HepG2 (cell line): ENCODE measurements at regions of chr2 and their contacts with region 1.

Region 1: GRCh38 chr2:11344342-11344955 is at the start of gene ROCK2:
- DNase-seq: peak; percentile 88
- ATAC-seq: peak; percentile 52
- H3K4me3 ChIP-seq: peak within 1 kb of the TSS; percentile 72 to 96 (median 86)
- H3K27ac ChIP-seq: peak within 1 kb of the TSS; percentile 98
- H3K4me1 ChIP-seq: peaks cover 52% of the 10 kb centered on the region
- H3K27me3 ChIP-seq: no peaks in the 10 kb centered on the region; a peak in 1 of 5 replicates
- CTCF ChIP-seq: peak; percentile 19; the same call in 1 of the 2 replicates
- EP300 ChIP-seq: peak in 1 of 2 experiments; percentile 52; a peak in 2 of 4 replicates
- POLR2A ChIP-seq: peak; percentile 17 to 80; a peak in 3 of 4 replicates
- RAD21 ChIP-seq: no peak
- total RNA-seq, gene ROCK2: 119 and 174 TPM in 2 replicates

Region 2: GRCh38 chr2:11239666-11240462 is 104.6 kb before region 1 on chr2:
- CTCF ChIA-PET with region 1: no interaction called
- POLR2A ChIA-PET with region 1: no interaction called
- in situ Hi-C with region 1: no loop called
- intact Hi-C with region 1: loop called (anchors 2 kb)
- DNase-seq: peak; percentile 70
- ATAC-seq: peak; percentile 54
- H3K4me3 ChIP-seq: no peak overlapping the region
- H3K27ac ChIP-seq: no peak overlapping the region
- H3K4me1 ChIP-seq: peaks cover 37% of the 10 kb centered on the region
- H3K27me3 ChIP-seq: no peaks in the 10 kb centered on the region
- CTCF ChIP-seq: no peak
- EP300 ChIP-seq: no peak
- POLR2A ChIP-seq: no peak
- RAD21 ChIP-seq: no peak

Region 3: DNA sequence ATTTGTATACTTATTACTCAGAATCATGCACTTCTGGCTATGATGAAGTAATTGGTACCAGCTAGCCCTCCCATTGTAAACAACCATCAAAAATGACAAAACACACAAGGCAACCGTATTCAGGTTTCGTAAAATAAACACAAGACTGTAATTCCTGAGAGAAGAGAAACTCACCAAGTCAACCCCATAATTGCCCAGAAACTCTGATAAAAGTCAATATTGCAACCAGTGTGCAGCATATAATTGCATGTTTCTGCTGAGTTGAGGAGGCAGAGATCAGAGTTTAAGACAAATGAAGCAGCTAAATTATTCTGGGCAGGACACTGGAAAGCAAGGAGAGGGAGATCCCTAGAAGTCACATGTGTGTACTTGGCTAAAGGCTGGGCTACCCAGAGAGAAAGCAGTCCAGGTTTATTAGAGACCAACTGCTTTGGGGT is 90.3 kb before region 1 on chr2:
- CTCF ChIA-PET with region 1: no interaction called
- POLR2A ChIA-PET with region 1: no interaction called
- in situ Hi-C with region 1: no loop called
- intact Hi-C with region 1: no loop called
- DNase-seq: peak; percentile 63
- ATAC-seq: peak; percentile 38
- H3K4me3 ChIP-seq: no peak overlapping the region
- H3K27ac ChIP-seq: peak overlapping the region; percentile 30
- H3K4me1 ChIP-seq: peaks cover 14% of the 10 kb centered on the region
- H3K27me3 ChIP-seq: no peaks in the 10 kb centered on the region
- CTCF ChIP-seq: no peak
- EP300 ChIP-seq: 0 out of 4 replicates have a peak, but pooled peaks of 1 of the 2 experiments have one; percentile 10
- POLR2A ChIP-seq: no peak
- RAD21 ChIP-seq: no peak

Region 4: DNA sequence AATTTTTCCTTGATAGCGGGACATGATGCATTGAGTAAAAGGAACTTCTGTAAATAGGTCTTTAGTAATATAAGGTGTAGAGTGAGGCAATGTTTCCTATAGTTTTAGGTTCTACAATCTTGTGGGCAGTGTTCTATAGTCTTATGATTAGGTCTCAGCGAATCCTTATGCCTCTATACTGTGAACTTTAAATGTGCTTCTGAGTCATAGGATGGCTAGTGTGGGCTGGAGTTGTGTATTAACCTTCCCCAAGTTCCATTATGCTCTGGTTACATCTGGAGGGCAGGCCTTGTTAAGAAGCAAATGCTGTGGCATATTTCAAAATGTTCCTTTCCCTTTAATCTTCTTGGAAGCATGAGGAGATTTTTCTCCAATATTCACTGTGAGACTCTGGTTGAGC is 73.6 kb before region 1 on chr2:
- CTCF ChIA-PET with region 1: no interaction called
- POLR2A ChIA-PET with region 1: no interaction called
- in situ Hi-C with region 1: no loop called
- intact Hi-C with region 1: no loop called
- DNase-seq: no peak
- ATAC-seq: peak; percentile 28; the same call in 2 of the 3 replicates
- H3K4me3 ChIP-seq: no peak overlapping the region
- H3K27ac ChIP-seq: no peak overlapping the region
- H3K4me1 ChIP-seq: no peaks in the 10 kb centered on the region
- H3K27me3 ChIP-seq: no peaks in the 10 kb centered on the region
- CTCF ChIP-seq: no peak
- EP300 ChIP-seq: no peak
- POLR2A ChIP-seq: no peak
- RAD21 ChIP-seq: no peak

Region 5: DNA sequence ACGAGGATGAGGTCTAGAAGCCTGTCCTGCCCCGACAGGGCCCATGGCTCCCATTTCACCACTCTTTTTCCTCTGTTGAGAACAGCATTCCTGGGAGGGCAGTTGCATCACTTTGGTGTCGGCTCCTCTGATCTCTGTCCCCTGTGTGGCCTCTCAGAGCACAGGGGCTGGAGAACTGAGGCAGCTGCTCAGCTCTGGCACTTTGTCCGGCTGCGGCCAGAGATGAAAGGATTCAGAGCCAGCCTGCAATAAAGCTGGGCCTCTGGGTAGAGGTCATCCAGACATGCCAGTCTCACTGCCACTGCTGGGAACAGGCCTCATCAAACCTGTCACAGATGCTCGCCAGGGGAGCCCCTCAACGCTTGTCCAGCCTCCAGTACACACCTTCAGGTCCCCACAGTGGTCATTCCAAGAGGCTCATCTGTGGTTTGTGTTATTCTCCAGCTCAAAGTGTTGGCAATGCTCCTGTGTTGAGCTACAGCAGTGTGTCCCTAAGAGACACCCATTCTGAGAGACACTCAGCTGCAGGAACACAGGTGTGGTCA is 13.1 kb after region 1 on chr2:
- CTCF ChIA-PET with region 1: interaction called, 5 read pairs
- POLR2A ChIA-PET with region 1: interaction called, 465 read pairs
- in situ Hi-C with region 1: no loop called
- intact Hi-C with region 1: loop called (anchors 1 kb)
- DNase-seq: peak; percentile 100
- ATAC-seq: peak; percentile 87
- H3K4me3 ChIP-seq: peak overlapping the region in 1 of 3 experiments; percentile 50; a peak in 2 of 6 replicates
- H3K27ac ChIP-seq: peak overlapping the region; percentile 93
- H3K4me1 ChIP-seq: peaks cover 95% of the 10 kb centered on the region
- H3K27me3 ChIP-seq: no peaks in the 10 kb centered on the region
- CTCF ChIP-seq: peak; percentile 15; the same call in 1 of the 2 replicates
- EP300 ChIP-seq: peak; percentile 100
- POLR2A ChIP-seq: peak; percentile 79 to 83
- RAD21 ChIP-seq: peak; percentile 91

Region 6: GRCh38 chr2:11389551-11390528 is 45.4 kb after region 1 on chr2:
- CTCF ChIA-PET with region 1: no interaction called
- POLR2A ChIA-PET with region 1: interaction called, 72 read pairs
- in situ Hi-C with region 1: no loop called
- intact Hi-C with region 1: no loop called
- DNase-seq: peak; percentile 93
- ATAC-seq: peak; percentile 65
- H3K4me3 ChIP-seq: peak overlapping the region in 2 of 3 experiments; percentile 33 to 61; a peak in 3 of 6 replicates
- H3K27ac ChIP-seq: no peak overlapping the region
- H3K4me1 ChIP-seq: peaks cover 79% of the 10 kb centered on the region
- H3K27me3 ChIP-seq: no peaks in the 10 kb centered on the region
- CTCF ChIP-seq: no peak
- EP300 ChIP-seq: peak in 1 of 2 experiments; percentile 49; a peak in 1 of 4 replicates
- POLR2A ChIP-seq: no peak
- RAD21 ChIP-seq: no peak

Region 7: DNA sequence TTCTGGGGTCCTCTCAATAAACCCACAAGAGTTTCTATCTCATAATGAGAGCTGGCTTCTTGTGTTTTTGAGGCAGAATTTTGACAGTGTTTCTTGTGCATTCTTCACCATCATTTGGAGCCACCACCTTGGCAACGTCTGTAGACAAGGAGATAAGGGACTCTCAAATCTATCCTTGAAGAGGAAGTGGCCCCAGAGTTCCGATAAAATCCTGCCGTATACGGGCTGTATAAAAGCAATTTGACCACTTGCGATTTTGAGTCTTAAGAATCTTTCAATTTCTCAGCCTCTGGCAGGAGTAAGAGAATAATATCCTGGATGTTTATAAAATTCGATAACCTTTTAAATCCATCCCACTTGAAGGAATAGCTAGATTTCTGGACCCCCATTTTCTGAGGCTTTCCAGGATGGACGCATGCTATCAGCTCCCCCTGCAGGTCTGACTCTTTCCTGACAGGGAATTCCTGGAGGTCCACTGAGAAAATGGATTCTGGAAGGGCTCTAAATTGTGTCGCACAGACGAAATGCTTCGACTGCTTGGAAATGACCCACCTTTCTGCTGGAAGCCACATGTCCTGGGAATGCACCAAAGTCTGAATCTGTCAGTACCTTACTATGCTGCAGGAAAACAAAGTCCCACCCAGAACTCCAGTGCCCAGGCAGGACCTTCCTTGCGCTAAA is 67.5 kb after region 1 on chr2:
- CTCF ChIA-PET with region 1: no interaction called
- POLR2A ChIA-PET with region 1: interaction called, 39 read pairs
- in situ Hi-C with region 1: loop called (anchors 5 kb)
- intact Hi-C with region 1: loop called (anchors 1 kb)
- DNase-seq: peak; percentile 65
- ATAC-seq: peak; percentile 78
- H3K4me3 ChIP-seq: no peak overlapping the region; a peak in 1 of 6 replicates
- H3K27ac ChIP-seq: no peak overlapping the region
- H3K4me1 ChIP-seq: peaks cover 33% of the 10 kb centered on the region
- H3K27me3 ChIP-seq: no peaks in the 10 kb centered on the region
- CTCF ChIP-seq: peak; percentile 92
- EP300 ChIP-seq: no peak
- POLR2A ChIP-seq: no peak
- RAD21 ChIP-seq: peak; percentile 93